IMR-90 (cell line): ENCODE measurements at regions of chr4 and their contacts with region 1.

Region 1: GRCh38 chr4:129929984-129930383 is 834.0 kb downstream of the C4orf33 start:
- DNase-seq: no peak
- ATAC-seq: no peak
- H3K4me3 ChIP-seq: no peak overlapping the region
- H3K27ac ChIP-seq: no peak overlapping the region
- H3K4me1 ChIP-seq: no peaks in the 10 kb centered on the region
- H3K27me3 ChIP-seq: no peaks in the 10 kb centered on the region
- CTCF ChIP-seq: no peak
- POLR2A ChIP-seq: no peak
- RAD21 ChIP-seq: no peak

Region 2: DNA sequence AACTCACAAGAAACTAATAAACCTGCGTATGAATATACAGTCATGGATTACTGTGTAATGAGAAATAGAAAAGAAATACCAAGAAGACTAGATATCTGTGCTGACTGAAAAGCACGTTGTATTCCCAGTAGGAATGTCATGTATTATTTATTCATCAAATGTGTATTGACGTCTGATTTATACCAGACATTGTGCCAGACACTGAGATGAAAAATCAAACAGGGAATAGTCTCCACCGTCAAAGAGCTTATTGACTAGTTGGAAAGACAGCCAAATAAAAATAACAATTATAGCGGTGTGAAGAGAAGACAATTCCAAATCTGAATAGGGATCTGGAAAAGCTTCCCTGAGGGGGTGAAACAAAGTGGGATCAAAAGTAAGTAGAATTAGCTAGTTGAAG is 146.4 kb before region 1 on chr4:
- CTCF ChIA-PET with region 1: no interaction called
- POLR2A ChIA-PET with region 1: no interaction called
- dilution Hi-C with region 1: no loop called
- in situ Hi-C with region 1: no loop called
- intact Hi-C with region 1: loop called (anchors 5 kb)
- DNase-seq: no peak
- ATAC-seq: no peak
- H3K4me3 ChIP-seq: no peak overlapping the region
- H3K27ac ChIP-seq: no peak overlapping the region
- H3K4me1 ChIP-seq: no peaks in the 10 kb centered on the region
- H3K27me3 ChIP-seq: no peaks in the 10 kb centered on the region
- CTCF ChIP-seq: no peak
- POLR2A ChIP-seq: no peak
- RAD21 ChIP-seq: no peak

Region 3: GRCh38 chr4:130203571-130203970 is 273.6 kb after region 1 on chr4:
- CTCF ChIA-PET with region 1: no interaction called
- POLR2A ChIA-PET with region 1: no interaction called
- dilution Hi-C with region 1: no loop called
- in situ Hi-C with region 1: no loop called
- intact Hi-C with region 1: no loop called
- DNase-seq: no peak
- ATAC-seq: no peak
- H3K4me3 ChIP-seq: no peak overlapping the region
- H3K27ac ChIP-seq: no peak overlapping the region
- H3K4me1 ChIP-seq: no peaks in the 10 kb centered on the region
- H3K27me3 ChIP-seq: no peaks in the 10 kb centered on the region
- CTCF ChIP-seq: no peak
- POLR2A ChIP-seq: no peak
- RAD21 ChIP-seq: no peak